ENCODE measurements at regions of chr22 and their contacts with region 1.

Region 1: DNA sequence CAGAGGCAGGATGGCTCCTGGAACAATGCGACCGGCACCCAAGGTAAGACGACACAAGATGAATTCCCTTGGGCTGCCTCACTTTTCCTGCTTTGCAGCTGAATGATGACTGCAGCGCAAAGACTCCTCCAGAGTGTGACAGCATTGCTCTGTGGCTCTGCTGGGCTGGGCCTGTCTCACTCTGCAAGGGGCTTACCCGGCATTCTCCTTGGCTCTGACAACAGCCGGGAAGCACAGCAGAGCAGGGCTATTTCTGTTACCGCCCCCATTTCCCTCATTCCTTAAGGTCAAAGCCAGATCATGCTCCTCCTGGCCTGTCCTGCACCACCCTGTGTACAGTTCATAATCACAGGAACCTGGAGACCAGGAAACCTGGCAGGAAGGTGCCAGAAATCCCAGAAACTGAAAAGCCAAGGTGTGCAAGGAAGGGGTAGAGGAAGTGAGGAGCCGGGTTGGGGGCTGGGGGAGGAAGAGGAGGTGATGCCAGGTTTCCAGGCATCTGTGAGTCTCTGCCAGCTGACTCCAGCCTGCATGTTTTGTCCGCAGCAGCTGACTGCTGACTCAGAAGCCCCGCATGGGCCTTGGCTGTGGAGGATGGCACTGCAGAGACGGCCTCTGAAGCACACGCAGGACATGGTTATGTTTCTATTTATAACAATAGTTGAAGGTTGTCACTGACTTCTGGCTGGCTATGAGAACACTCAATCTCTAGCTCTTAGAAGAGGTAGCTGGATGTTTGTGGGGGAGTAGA is 113.6 kb downstream of the MICAL3 start:
- DNase-seq: peak; percentile 39
- H3K4me3 ChIP-seq: no peak overlapping the region
- H3K27ac ChIP-seq: peak overlapping the region; percentile 34 to 51
- H3K4me1 ChIP-seq: peaks cover 6% of the 10 kb centered on the region
- H3K27me3 ChIP-seq: no peaks in the 10 kb centered on the region
- CTCF ChIP-seq: peak in 2 of 4 experiments; percentile 23 to 31
- POLR2A ChIP-seq: peak; percentile 14

Region 2: GRCh38 chr22:17830043-17830961 is 80.4 kb before region 1 on chr22:
- intact Hi-C with region 1: loop called (anchors 5 kb)
- DNase-seq: peak; percentile 91
- H3K4me3 ChIP-seq: no peak overlapping the region
- H3K27ac ChIP-seq: peak overlapping the region; percentile 64 to 71
- H3K4me1 ChIP-seq: no peaks in the 10 kb centered on the region
- H3K27me3 ChIP-seq: no peaks in the 10 kb centered on the region
- CTCF ChIP-seq: peak; percentile 97 to 100 (median 98)
- POLR2A ChIP-seq: no peak

Region 3: DNA sequence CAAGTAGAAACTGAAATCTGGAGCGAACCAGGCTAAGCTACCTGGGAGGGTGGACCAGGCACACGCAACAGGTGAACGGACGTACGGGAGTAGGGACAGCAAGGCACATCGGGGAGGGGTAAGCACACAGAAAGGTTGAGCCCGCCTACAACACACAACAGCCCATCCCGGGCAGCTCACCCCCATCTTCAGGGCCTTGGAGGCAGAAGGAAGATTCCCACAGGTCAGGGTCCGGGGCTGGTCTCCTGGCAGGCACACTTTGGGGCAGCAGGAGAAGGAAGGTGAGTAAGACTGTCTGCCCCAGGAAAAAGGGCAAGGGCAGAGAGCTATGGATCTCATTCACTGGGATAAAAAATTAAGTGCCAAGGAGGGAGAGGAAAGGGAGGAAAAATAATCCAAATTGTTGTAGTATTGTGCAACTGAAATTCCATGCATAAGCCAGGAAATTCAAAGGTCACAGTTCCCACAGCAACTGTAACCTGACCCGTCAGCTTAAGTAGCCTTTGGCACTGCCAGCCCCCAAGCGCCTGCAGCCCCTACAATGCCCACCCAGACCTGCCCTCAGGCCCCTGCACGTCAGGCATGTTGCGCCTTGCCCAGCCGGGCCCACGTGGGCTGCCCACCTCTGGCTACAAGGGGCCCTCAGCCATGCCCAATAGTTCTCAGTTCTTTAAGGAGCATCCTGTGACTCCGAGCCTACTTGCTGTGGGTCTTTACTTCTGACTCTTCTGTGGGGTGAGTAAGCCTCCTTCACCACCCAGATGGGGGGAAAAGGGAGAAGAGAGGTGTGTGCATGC is 61.8 kb after region 1 on chr22:
- intact Hi-C with region 1: loop called (anchors 10 kb)
- DNase-seq: no peak
- H3K4me3 ChIP-seq: no peak overlapping the region
- H3K27ac ChIP-seq: peak overlapping the region in 1 of 2 donors; percentile 10
- H3K4me1 ChIP-seq: peaks cover 4% of the 10 kb centered on the region
- H3K27me3 ChIP-seq: no peaks in the 10 kb centered on the region
- CTCF ChIP-seq: no peak
- POLR2A ChIP-seq: no peak

Region 4: GRCh38 chr22:18001040-18001893 is 90.5 kb after region 1 on chr22:
- intact Hi-C with region 1: loop called (anchors 2 kb)
- DNase-seq: peak; percentile 85
- H3K4me3 ChIP-seq: peak overlapping the region; percentile 81 to 91
- H3K27ac ChIP-seq: peak overlapping the region; percentile 88 to 89
- H3K4me1 ChIP-seq: peaks cover 3% of the 10 kb centered on the region
- H3K27me3 ChIP-seq: no peaks in the 10 kb centered on the region
- CTCF ChIP-seq: peak in 3 of 4 experiments; percentile 49 to 60 (median 59)
- POLR2A ChIP-seq: peak; percentile 75

Region 5: GRCh38 chr22:18024276-18024947 is 113.7 kb after region 1 on chr22 and contains the start of gene MICAL3:
- intact Hi-C with region 1: loop called (anchors 2 kb)
- DNase-seq: peak; percentile 57
- H3K4me3 ChIP-seq: peak within 1 kb of the TSS; percentile 55 to 58
- H3K27ac ChIP-seq: peak within 1 kb of the TSS; percentile 76 to 88
- H3K4me1 ChIP-seq: no peaks in the 10 kb centered on the region
- H3K27me3 ChIP-seq: no peaks in the 10 kb centered on the region
- CTCF ChIP-seq: peak in 3 of 4 experiments; percentile 31 to 68 (median 66)
- POLR2A ChIP-seq: no peak
- total RNA-seq, gene MICAL3: 58.6 to 78.7 TPM

Region 6: DNA sequence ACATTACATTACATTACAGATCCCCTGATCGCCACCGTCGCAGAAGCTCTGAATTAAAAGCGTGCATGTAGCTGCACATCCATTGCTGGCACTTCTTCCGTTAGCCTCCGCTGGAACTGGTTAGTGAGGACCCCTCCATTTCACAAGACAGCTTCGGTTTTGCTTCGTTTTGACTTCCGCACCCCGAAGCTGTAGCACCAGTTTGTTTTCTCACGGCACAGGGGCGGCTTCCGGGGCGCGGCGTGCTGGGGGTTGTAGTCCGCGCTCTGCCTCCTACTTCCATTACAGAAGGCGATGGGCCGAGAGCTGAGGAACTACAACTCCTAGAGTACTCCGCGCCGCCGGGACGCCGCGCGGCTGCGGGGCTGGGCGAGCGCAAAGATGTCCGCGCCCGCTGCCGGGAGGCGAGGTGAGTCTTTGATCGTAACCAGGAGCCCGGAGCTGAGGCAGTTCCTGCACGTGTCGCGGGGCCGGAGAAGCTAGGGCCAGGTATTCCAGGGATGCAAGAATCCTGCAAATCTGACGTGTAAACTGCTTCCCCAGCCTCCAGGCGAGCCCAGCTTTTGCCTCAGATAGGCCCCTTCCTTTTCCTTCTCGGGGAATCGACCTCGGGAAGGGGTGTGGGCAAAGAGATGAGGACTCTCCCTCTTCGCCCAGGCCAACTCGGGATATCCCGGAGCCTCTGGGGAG is 167.0 kb after region 1 on chr22 and contains the start of gene PEX26:
- intact Hi-C with region 1: loop called (anchors 5 kb)
- DNase-seq: peak; percentile 96
- H3K4me3 ChIP-seq: peak within 1 kb of the TSS; percentile 88 to 89
- H3K27ac ChIP-seq: peak within 1 kb of the TSS; percentile 71 to 82
- H3K4me1 ChIP-seq: peaks cover 19% of the 10 kb centered on the region
- H3K27me3 ChIP-seq: no peaks in the 10 kb centered on the region
- CTCF ChIP-seq: no peak
- POLR2A ChIP-seq: peak; percentile 54
- total RNA-seq, gene PEX26: 34.7 to 38.2 TPM